ENCODE measurements at regions of chr19 and their contacts with region 1.

Region 1: GRCh38 chr19:40598121-40598917 is 2.9 kb upstream of the LTBP4 start:
- DNase-seq: no peak
- ATAC-seq: peak; percentile 84
- H3K4me3 ChIP-seq: no peak overlapping the region
- H3K27ac ChIP-seq: no peak overlapping the region
- H3K4me1 ChIP-seq: peaks cover 11% of the 10 kb centered on the region
- H3K27me3 ChIP-seq: peaks cover 11 to 14% of the 10 kb centered on the region in 2 experiments
- CTCF ChIP-seq: peak; percentile 98 to 99 (median 98); a peak in 5 of 6 replicates
- EP300 ChIP-seq: no peak
- POLR2A ChIP-seq: no peak
- RAD21 ChIP-seq: peak; percentile 98

Region 2: GRCh38 chr19:40529093-40529954 is 69.0 kb before region 1 on chr19:
- CTCF ChIA-PET with region 1: interaction called, 7 read pairs
- POLR2A ChIA-PET with region 1: no interaction called
- RAD21 ChIA-PET with region 1: interaction called, 7 read pairs
- SMC1A ChIA-PET with region 1: no interaction called
- in situ Hi-C with region 1: no loop called
- intact Hi-C with region 1: loop called (anchors 1 kb)
- DNase-seq: peak; percentile 57
- ATAC-seq: peak; percentile 90
- H3K4me3 ChIP-seq: peak overlapping the region; percentile 32; the same call in 1 of the 2 replicates
- H3K27ac ChIP-seq: no peak overlapping the region
- H3K4me1 ChIP-seq: peaks cover 3% of the 10 kb centered on the region
- H3K27me3 ChIP-seq: no peaks in the 10 kb centered on the region; a peak in 1 of 4 replicates
- CTCF ChIP-seq: peak; percentile 95 to 98 (median 97)
- EP300 ChIP-seq: no peak
- POLR2A ChIP-seq: no peak
- RAD21 ChIP-seq: peak; percentile 38; the same call in 1 of the 2 replicates

Region 3: GRCh38 chr19:40549007-40549708 is 49.2 kb before region 1 on chr19:
- CTCF ChIA-PET with region 1: interaction called, 9 read pairs
- POLR2A ChIA-PET with region 1: interaction called, 7 read pairs
- RAD21 ChIA-PET with region 1: interaction called, 4 read pairs
- SMC1A ChIA-PET with region 1: no interaction called
- in situ Hi-C with region 1: no loop called
- intact Hi-C with region 1: loop called (anchors 1 kb)
- DNase-seq: no peak
- ATAC-seq: peak; percentile 97
- H3K4me3 ChIP-seq: no peak overlapping the region
- H3K27ac ChIP-seq: no peak overlapping the region
- H3K4me1 ChIP-seq: no peaks in the 10 kb centered on the region
- H3K27me3 ChIP-seq: peaks cover 0 to 3% of the 10 kb centered on the region in 2 experiments; a peak in 1 of 4 replicates
- CTCF ChIP-seq: peak in 2 of 3 experiments; percentile 53 to 63; a peak in 3 of 6 replicates
- EP300 ChIP-seq: no peak
- POLR2A ChIP-seq: no peak
- RAD21 ChIP-seq: peak; percentile 37

Region 4: GRCh38 chr19:40718774-40719391 is 120.6 kb after region 1 on chr19:
- CTCF ChIA-PET with region 1: no interaction called
- POLR2A ChIA-PET with region 1: no interaction called
- RAD21 ChIA-PET with region 1: no interaction called
- SMC1A ChIA-PET with region 1: no interaction called
- in situ Hi-C with region 1: no loop called
- intact Hi-C with region 1: no loop called
- DNase-seq: peak; percentile 8
- ATAC-seq: peak; percentile 33
- H3K4me3 ChIP-seq: peak overlapping the region; percentile 79
- H3K27ac ChIP-seq: peak overlapping the region; percentile 70
- H3K4me1 ChIP-seq: peaks cover 18% of the 10 kb centered on the region
- H3K27me3 ChIP-seq: no peaks in the 10 kb centered on the region
- CTCF ChIP-seq: no peak
- EP300 ChIP-seq: no peak
- POLR2A ChIP-seq: peak; percentile 69
- RAD21 ChIP-seq: no peak

Measured in GM12878 (cell line).